ENCODE measurements at regions of chr19 and their contacts with region 1.

Region 1: GRCh38 chr19:17889609-17890214 is 18.0 kb downstream of the SLC5A5 start:
- DNase-seq: no peak
- H3K4me3 ChIP-seq: no peak overlapping the region
- H3K27ac ChIP-seq: no peak overlapping the region
- H3K4me1 ChIP-seq: no peaks in the 10 kb centered on the region
- H3K27me3 ChIP-seq: peaks cover 0 to 10% of the 10 kb centered on the region in 2 donors
- CTCF ChIP-seq: no peak
- POLR2A ChIP-seq: no peak

Region 2: DNA sequence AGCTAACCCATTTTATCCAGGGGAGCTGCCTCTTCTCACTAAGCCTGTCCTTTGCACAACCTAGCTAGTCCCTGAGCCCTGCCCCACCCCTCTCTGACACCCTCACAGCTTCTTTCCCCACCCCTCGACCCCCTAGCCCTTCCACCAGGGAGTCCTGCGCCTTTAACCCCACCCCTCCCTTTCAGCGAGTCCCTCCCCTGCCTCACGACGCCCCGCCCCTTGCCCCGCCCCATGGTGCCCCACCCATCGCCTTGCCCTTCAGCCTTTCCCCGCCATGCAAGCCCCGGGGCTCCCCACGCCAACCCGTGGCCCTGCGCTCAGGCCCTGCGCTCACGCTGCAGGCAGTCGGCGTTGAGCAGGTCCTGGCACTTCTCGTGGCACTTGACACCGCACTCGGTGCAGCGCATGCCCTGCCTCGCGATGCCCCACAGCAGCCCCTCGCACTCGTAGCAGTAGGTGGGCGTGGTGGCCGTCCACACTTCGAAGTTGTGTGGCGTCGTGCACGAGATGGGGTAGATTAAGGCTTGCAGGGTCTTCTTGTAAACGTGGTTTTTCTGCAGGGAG is 241.5 kb before region 1 on chr19:
- intact Hi-C with region 1: loop called (anchors 5 kb)
- DNase-seq: no peak
- H3K4me3 ChIP-seq: no peak overlapping the region
- H3K27ac ChIP-seq: no peak overlapping the region
- H3K4me1 ChIP-seq: no peaks in the 10 kb centered on the region
- H3K27me3 ChIP-seq: peaks cover 0 to 26% of the 10 kb centered on the region in 2 donors
- CTCF ChIP-seq: no peak
- POLR2A ChIP-seq: no peak

Region 3: DNA sequence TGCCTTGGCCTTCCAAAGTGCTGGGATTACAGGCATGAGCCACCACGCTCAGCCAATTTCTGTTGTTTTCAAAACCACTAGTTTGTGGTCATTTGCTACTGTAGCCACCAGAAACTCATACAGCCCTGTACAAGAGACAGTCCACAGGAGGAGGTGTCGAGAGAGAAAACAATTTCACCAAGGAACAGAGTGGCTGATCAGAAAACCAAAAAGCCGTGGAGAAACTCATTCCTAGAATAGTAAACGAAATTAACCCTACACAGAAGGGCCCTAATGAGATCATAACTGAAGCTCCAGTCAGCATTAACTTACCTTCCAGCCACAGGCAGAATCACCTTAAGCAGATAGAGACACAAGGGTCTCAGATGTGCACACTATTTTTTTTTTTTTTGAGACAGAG is 39.3 kb after region 1 on chr19:
- intact Hi-C with region 1: no loop called
- DNase-seq: no peak
- H3K4me3 ChIP-seq: no peak overlapping the region
- H3K27ac ChIP-seq: no peak overlapping the region
- H3K4me1 ChIP-seq: peaks cover 6 to 8% of the 10 kb centered on the region in 2 donors
- H3K27me3 ChIP-seq: no peaks in the 10 kb centered on the region
- CTCF ChIP-seq: no peak
- POLR2A ChIP-seq: no peak